Mammary epithelial cell (primary cell): ENCODE measurements at regions of chr15 and their contacts with region 1.

Region 1: GRCh38 chr15:84716036-84716799 is at the start of gene SEC11A:
- DNase-seq: peak; percentile 97
- H3K4me3 ChIP-seq: peak within 1 kb of the TSS; percentile 71 to 97 (median 85)
- H3K27ac ChIP-seq: peak within 1 kb of the TSS; percentile 66
- H3K4me1 ChIP-seq: peaks cover 10% of the 10 kb centered on the region
- H3K27me3 ChIP-seq: no peaks in the 10 kb centered on the region
- CTCF ChIP-seq: no peak
- total RNA-seq, gene SEC11A: 130 to 146 TPM

Region 2: DNA sequence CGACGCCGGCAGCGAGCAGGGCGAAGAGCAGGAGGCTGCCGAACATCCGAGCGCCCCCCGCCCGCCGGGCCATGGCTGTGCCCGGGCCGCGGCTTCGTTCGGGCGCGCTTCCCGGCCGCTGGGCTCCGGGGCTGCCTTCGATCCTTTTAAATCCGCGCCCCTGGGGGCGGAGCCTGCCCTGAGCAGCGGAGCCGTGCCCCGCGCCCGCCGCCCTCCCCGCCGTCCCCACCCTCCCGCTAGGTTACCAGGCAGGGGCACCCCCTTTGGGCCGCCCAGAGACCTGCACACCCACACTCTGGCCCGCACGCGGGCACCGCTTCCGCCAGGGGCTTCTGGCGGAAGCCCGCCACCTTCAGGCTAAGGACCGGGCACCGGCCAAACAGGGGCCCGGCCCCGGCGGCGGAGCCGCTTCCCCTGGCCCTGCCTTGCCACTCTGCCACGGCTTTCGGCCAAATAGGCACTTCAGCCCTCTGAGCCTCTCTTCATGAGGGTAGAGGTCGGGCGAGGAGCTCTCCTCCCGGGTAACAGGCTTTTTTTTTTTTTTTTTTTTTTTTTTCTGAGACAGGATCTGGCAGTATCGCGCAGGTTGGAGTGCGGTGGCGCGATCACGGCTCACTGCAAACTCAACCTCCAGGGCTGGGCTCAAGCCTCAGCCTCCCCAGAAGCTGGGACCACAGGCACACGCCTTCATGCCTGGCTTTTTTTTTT is 58.0 kb before region 1 on chr15 and contains the start of gene NMB:
- CTCF ChIA-PET with region 1: no interaction called
- dilution Hi-C with region 1: no loop called
- in situ Hi-C with region 1: no loop called
- intact Hi-C with region 1: loop called (anchors 1 kb)
- DNase-seq: peak; percentile 54
- H3K4me3 ChIP-seq: peak within 1 kb of the TSS; percentile 40 to 57 (median 56)
- H3K27ac ChIP-seq: peak within 1 kb of the TSS; percentile 30
- H3K4me1 ChIP-seq: peaks cover 16% of the 10 kb centered on the region
- H3K27me3 ChIP-seq: no peaks in the 10 kb centered on the region
- CTCF ChIP-seq: peak; percentile 30 to 75
- total RNA-seq, gene NMB: 1.0 to 3.7 TPM

Region 3: DNA sequence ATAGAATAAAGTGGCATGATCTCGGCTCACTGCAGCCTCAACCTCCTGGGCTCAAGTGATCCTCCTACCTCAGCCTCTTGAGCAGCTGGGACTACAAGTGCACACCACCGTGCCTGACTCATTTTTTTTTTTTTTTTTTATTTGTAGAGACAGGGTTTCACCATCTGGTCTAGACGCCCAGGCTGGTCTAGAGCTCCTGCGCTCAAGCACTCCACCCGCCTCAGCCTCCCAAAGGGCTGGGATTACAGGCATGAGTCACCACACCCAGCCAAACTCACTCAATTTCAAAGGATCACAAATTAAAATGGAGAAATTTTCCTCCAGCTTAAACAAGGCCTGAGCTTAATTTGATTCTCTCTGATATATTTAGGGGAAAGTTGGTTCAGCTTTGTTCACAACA is 30.9 kb before region 1 on chr15:
- CTCF ChIA-PET with region 1: no interaction called
- dilution Hi-C with region 1: no loop called
- in situ Hi-C with region 1: no loop called
- intact Hi-C with region 1: no loop called
- DNase-seq: peak; percentile 84
- H3K4me3 ChIP-seq: no peak overlapping the region
- H3K27ac ChIP-seq: peak overlapping the region; percentile 19
- H3K4me1 ChIP-seq: no peaks in the 10 kb centered on the region
- H3K27me3 ChIP-seq: no peaks in the 10 kb centered on the region
- CTCF ChIP-seq: no peak

Region 4: GRCh38 chr15:84734794-84735479 is 18.7 kb after region 1 on chr15:
- CTCF ChIA-PET with region 1: no interaction called
- dilution Hi-C with region 1: no loop called
- in situ Hi-C with region 1: no loop called
- intact Hi-C with region 1: loop called (anchors 1 kb)
- DNase-seq: peak; percentile 61
- H3K4me3 ChIP-seq: peak overlapping the region; percentile 16 to 32 (median 19)
- H3K27ac ChIP-seq: peak overlapping the region; percentile 21
- H3K4me1 ChIP-seq: peaks cover 16% of the 10 kb centered on the region
- H3K27me3 ChIP-seq: no peaks in the 10 kb centered on the region
- CTCF ChIP-seq: no peak

Region 5: GRCh38 chr15:84766446-84767035 is 50.3 kb after region 1 on chr15:
- CTCF ChIA-PET with region 1: no interaction called
- dilution Hi-C with region 1: no loop called
- in situ Hi-C with region 1: no loop called
- intact Hi-C with region 1: no loop called
- DNase-seq: peak; percentile 62
- H3K4me3 ChIP-seq: no peak overlapping the region
- H3K27ac ChIP-seq: no peak overlapping the region
- H3K4me1 ChIP-seq: no peaks in the 10 kb centered on the region
- H3K27me3 ChIP-seq: no peaks in the 10 kb centered on the region
- CTCF ChIP-seq: no peak

Region 6: GRCh38 chr15:84871428-84872305 is 155.4 kb after region 1 on chr15:
- CTCF ChIA-PET with region 1: no interaction called
- dilution Hi-C with region 1: no loop called
- in situ Hi-C with region 1: no loop called
- intact Hi-C with region 1: loop called (anchors 5 kb)
- DNase-seq: no peak
- H3K4me3 ChIP-seq: no peak overlapping the region
- H3K27ac ChIP-seq: no peak overlapping the region
- H3K4me1 ChIP-seq: no peaks in the 10 kb centered on the region
- H3K27me3 ChIP-seq: no peaks in the 10 kb centered on the region
- CTCF ChIP-seq: no peak

Region 7: GRCh38 chr15:84886211-84886983 is 170.2 kb after region 1 on chr15:
- CTCF ChIA-PET with region 1: no interaction called
- dilution Hi-C with region 1: no loop called
- in situ Hi-C with region 1: no loop called
- intact Hi-C with region 1: no loop called
- DNase-seq: no peak
- H3K4me3 ChIP-seq: no peak overlapping the region
- H3K27ac ChIP-seq: no peak overlapping the region
- H3K4me1 ChIP-seq: peaks cover 6% of the 10 kb centered on the region
- H3K27me3 ChIP-seq: no peaks in the 10 kb centered on the region
- CTCF ChIP-seq: no peak